ENCODE measurements at regions of chr15 and their contacts with region 1.

Region 1: DNA sequence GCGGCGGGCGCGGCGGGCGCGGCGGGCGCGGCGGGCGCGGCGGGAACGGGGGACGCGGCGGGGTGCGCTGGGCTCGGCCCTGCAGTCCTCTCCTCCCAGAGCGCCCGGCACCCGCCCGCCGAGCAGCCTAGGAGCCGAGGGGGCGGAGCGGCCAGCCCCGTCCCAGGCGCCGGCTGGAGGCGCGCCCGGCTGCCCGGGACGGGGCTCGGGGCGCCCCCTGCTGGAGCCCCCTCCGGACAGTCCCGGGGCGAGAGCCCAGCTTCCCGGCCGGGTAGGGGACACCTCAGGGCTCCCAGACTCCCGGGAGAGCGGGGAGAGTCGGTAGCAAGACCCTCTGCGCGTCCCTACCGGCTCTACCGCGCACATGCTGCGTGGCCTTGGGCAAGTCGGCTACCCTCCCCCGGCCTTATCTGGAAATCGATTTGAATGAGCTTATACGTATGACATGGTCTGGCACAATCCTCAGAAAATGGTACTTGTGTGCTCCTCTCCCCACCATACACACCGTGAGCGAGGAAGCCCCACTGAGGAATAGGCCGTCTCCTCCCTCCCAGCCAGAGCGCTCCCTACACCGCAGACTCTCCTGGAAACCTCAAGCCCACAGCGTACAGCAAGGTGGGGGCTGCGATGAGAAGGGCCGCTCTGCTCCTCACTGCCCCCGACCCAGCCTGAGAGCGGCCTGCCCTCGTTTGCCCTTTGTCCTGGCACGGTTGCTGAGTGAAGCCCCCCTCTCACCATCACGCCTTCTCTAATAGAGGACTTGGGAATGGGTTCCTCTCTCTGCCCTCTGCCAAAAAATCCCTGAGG is at the start of gene DAPK2:
- DNase-seq: peak; percentile 70 to 84
- ATAC-seq: peak; percentile 92 to 93 (median 92)
- H3K4me3 ChIP-seq: peak within 1 kb of the TSS; percentile 38
- H3K4me3 Mint-ChIP-seq: peak within 1 kb of the TSS; percentile 82
- H3K27ac ChIP-seq: no peak within 1 kb of the TSS
- H3K27ac Mint-ChIP-seq: peak within 1 kb of the TSS in 1 of 2 donors; percentile 56
- H3K4me1 ChIP-seq: peaks cover 33% of the 10 kb centered on the region
- H3K4me1 Mint-ChIP-seq: peaks cover 0 to 11% of the 10 kb centered on the region in 2 donors
- H3K27me3 ChIP-seq: peaks cover 2% of the 10 kb centered on the region
- H3K27me3 Mint-ChIP-seq: peaks cover 18 to 19% of the 10 kb centered on the region in 2 donors
- CTCF ChIP-seq: peak; percentile 77
- total RNA-seq, gene DAPK2: 3.7 to 25.3 (median 6.0) TPM

Region 2: DNA sequence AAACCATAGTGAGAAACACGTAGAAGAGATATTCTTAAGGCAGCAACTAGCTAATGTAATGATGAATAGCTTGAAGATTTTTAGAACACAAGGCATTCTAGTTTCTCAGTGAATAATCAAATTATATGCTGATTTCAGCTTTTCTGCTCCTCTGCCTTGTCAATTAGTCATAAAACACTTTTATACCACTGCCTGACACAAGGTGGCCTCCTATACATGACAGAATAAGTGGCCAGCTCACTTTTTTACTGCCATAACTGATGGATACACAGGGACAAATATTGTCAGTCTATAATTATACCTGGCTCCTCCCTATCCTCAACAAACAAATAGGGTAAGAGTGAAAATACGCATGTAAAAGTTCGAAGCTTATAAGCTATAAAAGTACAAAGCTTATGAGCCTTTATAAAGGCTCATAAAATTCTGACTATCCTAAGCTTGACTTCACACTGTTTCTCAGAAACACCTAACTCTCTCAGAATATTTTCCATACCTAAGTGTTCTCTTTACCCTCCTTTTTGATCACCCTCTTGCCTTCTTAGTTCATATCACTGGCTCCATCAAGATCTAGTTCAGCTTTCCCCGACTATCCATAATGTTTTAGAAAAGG is 294.4 kb before region 1 on chr15:
- intact Hi-C with region 1: loop called (anchors 5 kb)
- DNase-seq: peak in 1 of 2 donors; percentile 73
- ATAC-seq: peak; percentile 78 to 94 (median 84)
- H3K4me3 ChIP-seq: no peak overlapping the region
- H3K4me3 Mint-ChIP-seq: no peak overlapping the region
- H3K27ac ChIP-seq: no peak overlapping the region
- H3K27ac Mint-ChIP-seq: peak overlapping the region in 1 of 2 donors; percentile 12
- H3K4me1 ChIP-seq: no peaks in the 10 kb centered on the region
- H3K4me1 Mint-ChIP-seq: no peaks in the 10 kb centered on the region
- H3K27me3 ChIP-seq: no peaks in the 10 kb centered on the region
- H3K27me3 Mint-ChIP-seq: no peaks in the 10 kb centered on the region
- CTCF ChIP-seq: peak; percentile 74

Region 3: GRCh38 chr15:63826528-63826927 is 220.0 kb before region 1 on chr15:
- intact Hi-C with region 1: loop called (anchors 1 kb)
- DNase-seq: peak in 1 of 2 donors; percentile 72
- ATAC-seq: peak in 2 of 3 donors; percentile 61 to 64
- H3K4me3 ChIP-seq: no peak overlapping the region
- H3K4me3 Mint-ChIP-seq: no peak overlapping the region
- H3K27ac ChIP-seq: no peak overlapping the region
- H3K27ac Mint-ChIP-seq: peak overlapping the region; percentile 1 to 67
- H3K4me1 ChIP-seq: peaks cover 7% of the 10 kb centered on the region
- H3K4me1 Mint-ChIP-seq: peaks cover 80 to 82% of the 10 kb centered on the region in 2 donors
- H3K27me3 ChIP-seq: no peaks in the 10 kb centered on the region
- H3K27me3 Mint-ChIP-seq: no peaks in the 10 kb centered on the region
- CTCF ChIP-seq: peak; percentile 47

Region 4: DNA sequence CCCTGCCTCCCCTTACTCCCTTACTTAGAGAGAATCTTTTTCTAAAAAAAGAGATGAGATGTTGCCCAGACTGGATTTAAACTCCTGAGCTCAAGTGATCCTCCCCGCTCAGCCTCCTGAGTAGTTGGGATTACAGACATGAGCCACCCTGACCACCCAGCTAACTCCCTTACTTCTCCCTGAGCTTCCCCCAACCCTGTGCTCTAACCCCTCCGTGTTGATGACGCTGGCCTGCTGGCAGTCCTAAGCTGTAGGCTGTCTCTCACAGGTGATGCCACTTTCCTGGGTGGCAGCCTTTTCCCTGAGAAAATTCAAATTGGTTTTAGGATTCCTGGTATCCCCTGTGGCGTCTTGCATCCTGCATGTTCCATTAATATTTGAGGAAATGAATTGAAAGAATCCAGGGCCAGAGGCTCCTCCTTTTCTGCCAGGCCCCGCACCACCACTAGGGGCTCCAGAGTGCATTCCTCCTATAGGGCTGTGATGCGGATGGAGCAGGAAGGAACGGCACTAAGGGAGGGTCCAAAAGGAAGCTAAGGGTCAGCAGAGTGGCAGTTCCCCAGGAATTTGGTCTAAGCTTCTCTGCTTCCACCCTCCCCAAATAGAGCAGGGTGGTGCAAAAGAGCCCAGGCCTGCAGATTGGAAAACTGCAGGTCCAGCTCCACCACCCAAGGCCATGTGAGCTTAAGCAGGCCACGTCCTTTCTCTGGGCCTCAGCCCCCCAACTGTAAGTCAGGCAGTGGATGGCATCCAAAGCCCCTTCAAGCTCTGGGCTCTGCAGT is 101.4 kb before region 1 on chr15:
- intact Hi-C with region 1: loop called (anchors 1 kb)
- DNase-seq: peak; percentile 60 to 78
- ATAC-seq: peak; percentile 87 to 98 (median 97)
- H3K4me3 ChIP-seq: no peak overlapping the region
- H3K4me3 Mint-ChIP-seq: peak overlapping the region; percentile 39
- H3K27ac ChIP-seq: no peak overlapping the region
- H3K27ac Mint-ChIP-seq: peak overlapping the region; percentile 76 to 84
- H3K4me1 ChIP-seq: peaks cover 15% of the 10 kb centered on the region
- H3K4me1 Mint-ChIP-seq: peaks cover 7 to 33% of the 10 kb centered on the region in 2 donors
- H3K27me3 ChIP-seq: no peaks in the 10 kb centered on the region
- H3K27me3 Mint-ChIP-seq: no peaks in the 10 kb centered on the region
- CTCF ChIP-seq: peak; percentile 91

Region 5: GRCh38 chr15:64558460-64559179 is 512.1 kb after region 1 on chr15:
- intact Hi-C with region 1: no loop called
- DNase-seq: no peak
- ATAC-seq: no peak
- H3K4me3 ChIP-seq: no peak overlapping the region
- H3K4me3 Mint-ChIP-seq: no peak overlapping the region
- H3K27ac ChIP-seq: no peak overlapping the region
- H3K27ac Mint-ChIP-seq: peak overlapping the region; percentile 27 to 53
- H3K4me1 ChIP-seq: no peaks in the 10 kb centered on the region
- H3K4me1 Mint-ChIP-seq: peaks cover 28 to 37% of the 10 kb centered on the region in 2 donors
- H3K27me3 ChIP-seq: no peaks in the 10 kb centered on the region
- H3K27me3 Mint-ChIP-seq: no peaks in the 10 kb centered on the region
- CTCF ChIP-seq: no peak